ENCODE measurements at regions of chr14 and their contacts with region 1.

Region 1: DNA sequence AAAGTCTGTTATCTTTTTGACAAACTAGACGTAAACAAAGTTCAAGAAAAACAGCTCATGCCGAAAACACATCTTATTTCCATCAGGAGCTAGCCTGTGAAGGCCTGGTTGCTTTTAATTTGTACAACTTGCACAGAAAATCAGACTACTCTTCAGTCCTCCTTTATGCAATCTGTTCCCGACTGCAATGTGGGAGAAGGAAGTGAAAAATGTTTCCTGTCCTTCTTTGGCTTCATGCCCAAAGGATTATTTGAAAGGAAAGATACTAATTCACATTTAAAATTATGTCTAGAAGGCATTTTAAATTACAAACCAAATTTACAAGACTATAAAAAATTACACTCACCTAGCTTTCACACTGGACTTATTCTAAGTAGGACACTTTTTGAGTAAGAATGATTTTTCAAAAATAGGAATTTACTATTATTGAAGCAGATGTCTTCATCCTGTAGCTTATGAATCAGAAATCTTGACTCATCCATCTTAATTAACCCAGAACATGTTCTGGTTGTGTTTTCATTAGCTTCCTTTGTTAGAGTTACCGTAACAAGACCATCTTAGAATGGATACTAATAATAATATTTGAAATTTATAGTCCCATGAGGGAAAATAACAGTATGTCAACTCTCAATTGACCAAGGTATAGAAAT is 272.6 kb downstream of the PRKD1 start:
- DNase-seq: no peak
- ATAC-seq: no peak
- H3K4me3 ChIP-seq: no peak overlapping the region
- H3K27ac ChIP-seq: no peak overlapping the region
- H3K4me1 ChIP-seq: no peaks in the 10 kb centered on the region
- H3K27me3 ChIP-seq: no peaks in the 10 kb centered on the region
- CTCF ChIP-seq: no peak

Region 2: GRCh38 chr14:30020271-30020670 is 365.2 kb after region 1 on chr14:
- CTCF ChIA-PET with region 1: no interaction called
- POLR2A ChIA-PET with region 1: no interaction called
- in situ Hi-C with region 1: no loop called
- intact Hi-C with region 1: no loop called
- DNase-seq: no peak
- ATAC-seq: no peak
- H3K4me3 ChIP-seq: no peak overlapping the region
- H3K27ac ChIP-seq: no peak overlapping the region
- H3K4me1 ChIP-seq: no peaks in the 10 kb centered on the region
- H3K27me3 ChIP-seq: no peaks in the 10 kb centered on the region
- CTCF ChIP-seq: no peak

Region 3: GRCh38 chr14:30077946-30078345 is 422.9 kb after region 1 on chr14:
- CTCF ChIA-PET with region 1: no interaction called
- POLR2A ChIA-PET with region 1: no interaction called
- in situ Hi-C with region 1: no loop called
- intact Hi-C with region 1: loop called (anchors 5 kb)
- DNase-seq: no peak
- ATAC-seq: no peak
- H3K4me3 ChIP-seq: no peak overlapping the region
- H3K27ac ChIP-seq: no peak overlapping the region
- H3K4me1 ChIP-seq: no peaks in the 10 kb centered on the region
- H3K27me3 ChIP-seq: no peaks in the 10 kb centered on the region
- CTCF ChIP-seq: no peak

Region 4: GRCh38 chr14:31414190-31414833 is 1759.3 kb after region 1 on chr14:
- CTCF ChIA-PET with region 1: no interaction called
- POLR2A ChIA-PET with region 1: no interaction called
- in situ Hi-C with region 1: no loop called
- intact Hi-C with region 1: no loop called
- DNase-seq: no peak
- ATAC-seq: 0 out of 2 replicates have a peak, but pooled peaks have one; percentile 38
- H3K4me3 ChIP-seq: no peak overlapping the region
- H3K27ac ChIP-seq: no peak overlapping the region
- H3K4me1 ChIP-seq: peaks cover 6% of the 10 kb centered on the region; the same call in 1 of the 2 replicates
- H3K27me3 ChIP-seq: no peaks in the 10 kb centered on the region
- CTCF ChIP-seq: no peak

Measured in Panc1 (cell line).